ENCODE measurements at regions of chr5 and their contacts with region 1.

Region 1: DNA sequence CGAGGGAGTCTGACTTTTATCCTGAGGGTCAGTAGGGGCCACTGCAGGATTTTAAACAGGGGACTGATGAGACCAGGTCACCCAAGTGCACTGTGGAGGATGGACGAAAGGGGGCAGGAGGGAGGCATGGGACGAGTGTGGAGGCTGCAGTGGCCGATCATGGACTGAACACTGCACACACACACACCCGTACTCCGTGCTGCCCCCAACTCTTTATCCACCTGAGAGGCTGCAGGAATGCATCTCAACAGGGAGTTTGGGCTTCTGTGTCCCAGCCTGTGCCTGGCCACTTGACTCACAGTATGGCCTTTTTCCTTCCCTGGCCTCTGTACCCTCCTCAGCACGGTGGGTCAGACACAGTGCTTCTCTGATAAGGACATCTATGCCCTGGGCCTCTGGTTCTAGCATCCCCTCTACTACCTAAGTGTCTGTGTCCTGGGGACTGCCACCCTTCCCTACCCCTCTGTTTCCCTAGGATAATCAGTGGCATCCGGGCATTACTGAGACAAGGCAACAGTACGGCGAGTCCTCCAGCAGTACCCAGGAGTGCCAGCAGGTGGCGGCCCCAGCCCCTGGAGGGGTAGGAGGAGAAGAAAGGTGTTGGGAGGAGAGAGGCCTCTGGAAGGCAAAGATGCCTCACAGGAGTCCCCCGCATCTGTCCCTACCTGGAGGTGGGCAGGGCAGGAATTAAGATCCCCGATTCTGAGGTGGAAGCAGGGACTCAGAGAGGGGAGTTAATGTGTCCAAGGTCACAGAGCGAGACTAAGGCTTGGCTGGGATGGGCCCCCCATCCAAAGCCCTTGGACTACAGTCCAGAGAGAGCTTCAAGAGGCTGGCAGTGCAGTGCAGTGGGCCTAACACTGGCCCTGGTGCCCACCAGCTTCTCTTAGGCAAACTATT is 5.1 kb upstream of the CDX1 start:
- DNase-seq: peak; percentile 88
- ATAC-seq: peak; percentile 51

Region 2: DNA sequence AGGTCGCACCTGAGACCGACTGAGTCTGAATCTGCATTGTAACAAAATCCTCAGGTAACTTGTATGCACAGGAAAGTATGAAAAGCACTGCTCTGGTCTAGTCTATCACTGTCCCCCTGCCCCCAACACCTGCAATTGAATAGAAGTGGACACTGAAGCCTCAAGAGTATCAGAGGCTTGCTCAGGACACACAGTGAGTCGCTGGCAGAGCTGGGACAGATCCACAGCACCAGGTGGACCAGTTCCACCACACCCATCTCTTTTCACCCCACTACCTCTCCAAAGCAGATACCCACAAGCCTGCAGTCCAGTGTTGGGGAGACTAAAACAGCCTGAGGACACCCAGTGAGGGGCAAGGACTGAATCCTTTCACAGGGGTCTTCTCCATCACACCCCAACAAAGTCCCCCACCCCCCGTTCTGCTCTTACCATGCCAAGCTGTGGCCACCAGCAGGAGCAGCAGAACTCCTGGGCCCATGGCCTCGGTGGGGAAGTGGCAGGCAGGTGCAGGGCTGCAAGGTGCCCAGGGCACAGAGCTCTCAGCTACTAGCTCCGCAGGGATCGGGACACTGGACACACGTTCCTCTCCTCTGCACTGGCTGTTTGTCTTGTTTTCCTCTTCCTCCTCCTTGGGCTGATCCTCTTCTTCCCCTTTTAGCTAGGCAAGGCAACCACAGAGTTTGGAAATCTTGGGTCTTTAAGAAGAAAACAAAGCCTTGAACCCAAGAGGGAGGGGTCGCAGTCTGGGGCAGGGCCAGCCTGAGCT is 75.4 kb before region 1 on chr5 and contains the start of gene CSF1R:
- intact Hi-C with region 1: no loop called
- DNase-seq: peak; percentile 55
- ATAC-seq: peak; percentile 32
- total RNA-seq, gene CSF1R: 21.9 TPM

Region 3: GRCh38 chr5:150138551-150139265 is 22.8 kb before region 1 on chr5:
- intact Hi-C with region 1: loop called (anchors 2 kb)
- DNase-seq: peak; percentile 78
- ATAC-seq: peak; percentile 8

Region 4: GRCh38 chr5:150180241-150181026 is 18.9 kb after region 1 on chr5:
- intact Hi-C with region 1: loop called (anchors 2 kb)
- DNase-seq: peak; percentile 88
- ATAC-seq: peak; percentile 85

Region 5: GRCh38 chr5:150217873-150218692 is 56.6 kb after region 1 on chr5:
- intact Hi-C with region 1: loop called (anchors 1 kb)
- DNase-seq: peak; percentile 89
- ATAC-seq: peak; percentile 83

Region 6: DNA sequence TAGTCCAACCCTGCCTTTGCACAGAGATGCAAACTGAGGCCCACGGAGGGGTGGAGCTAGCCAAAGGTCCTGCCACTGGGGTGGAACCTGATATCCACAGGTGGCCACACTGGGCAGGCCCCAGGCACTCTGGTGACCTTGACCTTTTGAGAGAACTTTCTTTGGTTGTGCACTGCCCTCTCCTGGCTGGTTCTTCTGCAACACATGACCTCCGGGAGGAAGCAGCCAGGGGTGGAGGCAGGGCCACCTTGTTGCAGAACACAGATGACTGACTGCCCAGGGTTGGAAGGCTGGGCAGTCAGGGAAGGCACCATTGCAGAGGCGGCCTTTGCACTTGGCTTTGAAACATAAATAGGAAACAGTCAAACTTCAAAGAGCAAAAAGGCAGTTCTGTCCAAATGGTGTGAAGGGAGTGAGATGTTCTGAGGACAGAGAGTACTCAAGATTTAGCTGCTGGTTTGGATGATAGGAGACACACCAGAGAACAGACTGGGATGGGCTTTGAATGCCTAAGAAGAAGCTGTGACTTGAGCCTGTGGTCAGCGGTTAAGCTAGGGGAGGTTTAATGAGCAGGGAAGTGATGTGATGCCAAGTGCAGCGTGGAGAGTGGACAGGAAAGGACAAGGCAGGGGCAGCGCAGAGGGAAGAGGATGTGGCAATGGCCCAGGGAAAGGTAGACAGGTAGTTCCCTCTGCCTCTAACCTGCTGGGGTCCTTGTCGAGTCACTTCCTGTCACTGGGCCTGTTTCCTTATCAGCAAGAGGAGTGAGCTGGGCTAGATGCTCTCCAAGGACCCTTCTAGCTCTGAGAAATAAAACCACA is 189.2 kb after region 1 on chr5:
- intact Hi-C with region 1: loop called (anchors 1 kb)
- DNase-seq: peak; percentile 80
- ATAC-seq: peak; percentile 90

Measured in Right ventricle myocardium inferior (tissue), 1 donor.